ENCODE measurements at regions of chr1 and their contacts with region 1.

Region 1: GRCh38 chr1:207885129-207886032 is 25.5 kb downstream of the CD34 start:
- DNase-seq: peak; percentile 70
- ATAC-seq: peak; percentile 96
- H3K4me3 ChIP-seq: no peak overlapping the region
- H3K27ac ChIP-seq: no peak overlapping the region
- H3K4me1 ChIP-seq: peaks cover 13% of the 10 kb centered on the region; the same call in 1 of the 2 replicates
- H3K27me3 ChIP-seq: peaks cover 2 to 38% of the 10 kb centered on the region in 2 experiments
- CTCF ChIP-seq: peak; percentile 90
- EP300 ChIP-seq: no peak; a peak in 1 of 4 replicates
- POLR2A ChIP-seq: no peak
- RAD21 ChIP-seq: peak; percentile 81; the same call in 1 of the 2 replicates

Region 2: GRCh38 chr1:207620543-207620893 is 264.9 kb before region 1 on chr1:
- CTCF ChIA-PET with region 1: no interaction called
- POLR2A ChIA-PET with region 1: no interaction called
- in situ Hi-C with region 1: no loop called
- intact Hi-C with region 1: no loop called
- DNase-seq: no peak
- ATAC-seq: no peak
- H3K4me3 ChIP-seq: no peak overlapping the region
- H3K27ac ChIP-seq: no peak overlapping the region
- H3K4me1 ChIP-seq: no peaks in the 10 kb centered on the region
- H3K27me3 ChIP-seq: no peaks in the 10 kb centered on the region
- CTCF ChIP-seq: no peak
- EP300 ChIP-seq: no peak
- POLR2A ChIP-seq: no peak
- RAD21 ChIP-seq: no peak; the same call in 1 of the 2 replicates

Region 3: DNA sequence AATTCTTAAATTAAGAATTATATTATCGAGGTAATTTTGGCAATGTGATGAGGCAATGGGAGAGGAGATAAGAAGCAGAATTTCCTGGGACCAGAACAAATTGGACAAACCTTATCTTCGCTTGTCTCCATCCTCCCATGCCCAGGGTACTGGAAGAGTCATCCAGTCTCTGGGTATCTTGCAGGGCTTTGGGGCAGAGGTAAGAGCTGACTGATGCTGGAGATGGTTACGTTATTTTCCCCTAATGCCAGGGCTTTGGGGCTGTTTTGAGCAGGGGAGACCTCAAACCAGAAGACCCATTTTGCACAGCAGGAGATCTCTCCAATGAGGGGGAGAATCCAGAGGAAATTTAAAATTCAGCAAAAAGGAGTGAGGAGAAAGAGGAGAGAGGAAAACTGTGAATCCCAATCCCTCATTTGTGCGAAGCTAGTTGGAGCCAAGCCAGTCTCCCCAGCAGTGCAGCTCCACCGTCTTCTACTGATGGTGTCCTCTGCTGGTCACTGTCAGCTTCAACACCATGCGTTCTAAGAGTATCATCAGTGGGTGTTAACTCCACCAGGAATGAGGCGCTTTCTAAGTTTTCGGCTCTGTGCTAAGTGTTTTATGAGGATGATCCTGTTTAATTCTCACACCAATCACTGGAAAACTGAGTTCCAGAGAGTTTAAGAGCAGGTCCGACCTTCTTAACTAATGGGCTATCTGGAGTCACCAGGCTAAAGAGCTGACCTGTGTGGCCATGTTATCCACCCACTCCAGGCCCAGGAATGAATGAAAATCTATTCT is 112.3 kb after region 1 on chr1:
- CTCF ChIA-PET with region 1: interaction called, 10 read pairs
- POLR2A ChIA-PET with region 1: no interaction called
- in situ Hi-C with region 1: loop called (anchors 10 kb)
- intact Hi-C with region 1: loop called (anchors 1 kb)
- DNase-seq: peak; percentile 52
- ATAC-seq: peak; percentile 97
- H3K4me3 ChIP-seq: no peak overlapping the region
- H3K27ac ChIP-seq: no peak overlapping the region
- H3K4me1 ChIP-seq: no peaks in the 10 kb centered on the region
- H3K27me3 ChIP-seq: peaks cover 0 to 1% of the 10 kb centered on the region in 2 experiments; a peak in 1 of 5 replicates
- CTCF ChIP-seq: peak; percentile 82
- EP300 ChIP-seq: no peak
- POLR2A ChIP-seq: no peak
- RAD21 ChIP-seq: no peak